ENCODE measurements at regions of chr6 and their contacts with region 1.

Region 1: GRCh38 chr6:159761873-159762680 is at the start of gene ACAT2:
- DNase-seq: peak; percentile 94 to 96
- H3K4me3 ChIP-seq: peak within 1 kb of the TSS; percentile 92 to 98
- H3K27ac ChIP-seq: peak within 1 kb of the TSS; percentile 99 to 100
- H3K4me1 ChIP-seq: no peaks in the 10 kb centered on the region
- H3K27me3 ChIP-seq: no peaks in the 10 kb centered on the region
- CTCF ChIP-seq: peak in 2 of 4 experiments; percentile 15 to 37
- POLR2A ChIP-seq: peak; percentile 50 to 77
- total RNA-seq, gene ACAT2: 5.6 to 19.6 (median 11.2) TPM

Region 2: DNA sequence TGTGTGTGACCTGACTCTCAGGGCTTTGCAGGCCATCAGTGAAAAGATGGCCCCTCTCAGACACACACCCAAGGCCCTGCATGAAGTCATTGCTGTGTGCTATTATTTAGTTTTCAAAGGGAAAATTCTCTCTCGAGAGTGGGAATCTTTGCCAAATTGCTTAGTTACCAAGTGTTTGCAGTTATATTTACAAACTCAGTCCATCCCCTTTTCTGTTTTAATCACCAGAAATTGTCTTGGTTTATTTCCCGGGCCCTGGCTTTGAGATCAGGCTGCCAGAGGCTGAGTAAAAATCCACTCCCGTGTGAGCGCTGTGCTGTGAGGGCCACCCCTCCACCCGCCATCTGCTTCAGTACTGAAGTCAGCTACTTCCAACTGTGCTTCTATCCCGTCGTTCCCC is 232.1 kb before region 1 on chr6:
- intact Hi-C with region 1: no loop called
- DNase-seq: peak in 1 of 2 donors; percentile 53
- H3K4me3 ChIP-seq: no peak overlapping the region
- H3K27ac ChIP-seq: peak overlapping the region in 1 of 2 donors; percentile 28
- H3K4me1 ChIP-seq: no peaks in the 10 kb centered on the region
- H3K27me3 ChIP-seq: no peaks in the 10 kb centered on the region
- CTCF ChIP-seq: no peak
- POLR2A ChIP-seq: no peak

Region 3: DNA sequence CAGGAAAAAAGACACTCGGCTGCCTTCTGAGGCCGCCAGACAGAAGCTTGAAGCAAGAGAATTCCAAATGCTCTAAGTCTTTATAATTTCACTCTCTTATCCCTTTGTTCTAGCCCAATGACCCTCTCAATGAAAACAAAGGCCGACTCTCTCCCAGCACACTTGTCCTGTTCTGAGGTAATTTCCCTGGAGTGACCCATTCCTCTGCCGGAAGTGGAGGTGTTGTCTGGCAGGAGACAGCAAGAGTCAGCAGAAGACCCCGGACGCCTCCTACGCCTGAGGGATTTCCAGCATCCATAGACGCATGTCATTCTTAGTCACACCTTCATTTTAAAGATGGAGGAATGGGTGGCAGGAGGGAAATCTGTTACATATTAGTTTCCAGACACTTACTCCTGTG is 179.3 kb before region 1 on chr6:
- intact Hi-C with region 1: no loop called
- DNase-seq: no peak
- H3K4me3 ChIP-seq: no peak overlapping the region
- H3K27ac ChIP-seq: no peak overlapping the region
- H3K4me1 ChIP-seq: no peaks in the 10 kb centered on the region
- H3K27me3 ChIP-seq: no peaks in the 10 kb centered on the region
- CTCF ChIP-seq: no peak
- POLR2A ChIP-seq: no peak

Region 4: GRCh38 chr6:159726918-159727716 is 35.0 kb before region 1 on chr6 and contains the start of gene WTAP:
- intact Hi-C with region 1: loop called (anchors 5 kb)
- DNase-seq: peak; percentile 96 to 97
- H3K4me3 ChIP-seq: peak within 1 kb of the TSS; percentile 93 to 94
- H3K27ac ChIP-seq: peak within 1 kb of the TSS; percentile 99
- H3K4me1 ChIP-seq: peaks cover 0 to 20% of the 10 kb centered on the region in 2 donors
- H3K27me3 ChIP-seq: no peaks in the 10 kb centered on the region
- CTCF ChIP-seq: peak in 1 of 4 experiments; percentile 16
- POLR2A ChIP-seq: peak; percentile 74 to 83
- total RNA-seq, gene WTAP: 33.3 to 139 (median 95.9) TPM